Activated CD4-positive, alpha-beta T cell treated with anti-CD3 and anti-CD28 coated beads for 36 hours (primary cell): ENCODE measurements at regions of chr5 and their contacts with region 1.

Region 1: GRCh38 chr5:62284946-62285891 is 20.8 kb upstream of the KIF2A start:
- DNase-seq: peak; percentile 84
- ATAC-seq: peak; percentile 84
- H3K4me3 Mint-ChIP-seq: peak overlapping the region; percentile 35
- H3K27ac Mint-ChIP-seq: peak overlapping the region; percentile 96
- H3K4me1 Mint-ChIP-seq: peaks cover 79% of the 10 kb centered on the region
- H3K27me3 Mint-ChIP-seq: no peaks in the 10 kb centered on the region

Region 2: DNA sequence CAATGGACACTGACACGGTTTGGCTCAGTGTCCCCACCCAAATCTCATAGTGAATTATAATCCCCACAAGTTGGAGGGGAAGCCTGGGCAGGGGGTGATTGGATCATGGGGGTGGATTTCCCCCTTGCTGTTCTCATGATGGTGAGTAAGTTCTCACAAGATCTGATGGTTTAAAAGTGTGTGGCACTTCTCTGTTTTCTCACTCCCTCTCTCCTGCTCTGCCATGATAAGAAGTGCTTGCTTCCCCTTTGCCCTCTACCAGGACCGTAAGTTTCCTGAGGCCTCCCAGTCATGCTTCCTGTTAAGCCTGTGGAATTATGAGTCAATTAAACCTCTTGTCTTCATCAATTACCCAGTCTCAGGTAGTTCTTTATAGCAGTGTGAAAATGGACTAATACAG is 95.0 kb before region 1 on chr5:
- CTCF ChIA-PET with region 1: no interaction called
- POLR2A ChIA-PET with region 1: no interaction called
- intact Hi-C with region 1: no loop called
- DNase-seq: no peak
- ATAC-seq: no peak
- H3K4me3 Mint-ChIP-seq: no peak overlapping the region
- H3K27ac Mint-ChIP-seq: no peak overlapping the region
- H3K4me1 Mint-ChIP-seq: no peaks in the 10 kb centered on the region
- H3K27me3 Mint-ChIP-seq: peaks cover 9% of the 10 kb centered on the region

Region 3: DNA sequence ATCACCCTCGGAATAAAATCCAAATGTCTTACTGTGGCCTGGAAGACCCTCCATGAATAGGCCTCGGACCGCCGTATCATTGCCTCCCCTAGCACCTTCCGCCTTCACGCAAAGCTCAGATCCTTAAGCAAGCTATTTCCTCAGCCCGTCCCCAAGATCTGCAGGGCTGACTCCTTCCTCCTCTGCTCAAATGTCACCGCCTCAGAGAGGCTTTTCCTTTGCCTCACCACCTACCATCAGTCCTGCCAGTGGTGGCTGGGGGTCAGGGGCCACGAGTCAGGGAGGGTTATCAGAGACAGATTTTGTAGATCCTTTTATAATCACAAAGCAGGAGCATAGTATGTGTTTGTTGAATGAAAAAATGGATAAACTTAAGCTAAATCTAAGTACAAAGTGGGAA is 53.6 kb before region 1 on chr5:
- CTCF ChIA-PET with region 1: interaction called, 3 read pairs
- POLR2A ChIA-PET with region 1: interaction called, 6 read pairs
- intact Hi-C with region 1: loop called (anchors 5 kb)
- DNase-seq: no peak
- ATAC-seq: no peak
- H3K4me3 Mint-ChIP-seq: no peak overlapping the region
- H3K27ac Mint-ChIP-seq: no peak overlapping the region
- H3K4me1 Mint-ChIP-seq: peaks cover 18% of the 10 kb centered on the region
- H3K27me3 Mint-ChIP-seq: no peaks in the 10 kb centered on the region

Region 4: GRCh38 chr5:62297026-62297425 is 11.8 kb after region 1 on chr5:
- CTCF ChIA-PET with region 1: interaction called, 17 read pairs
- POLR2A ChIA-PET with region 1: no interaction called
- intact Hi-C with region 1: no loop called
- DNase-seq: no peak
- ATAC-seq: peak; percentile 78
- H3K4me3 Mint-ChIP-seq: peak overlapping the region; percentile 38
- H3K27ac Mint-ChIP-seq: peak overlapping the region; percentile 73
- H3K4me1 Mint-ChIP-seq: peaks cover 62% of the 10 kb centered on the region
- H3K27me3 Mint-ChIP-seq: no peaks in the 10 kb centered on the region

Region 5: GRCh38 chr5:62403434-62404250 is 118.4 kb after region 1 on chr5 and contains the start of gene DIMT1:
- CTCF ChIA-PET with region 1: no interaction called
- POLR2A ChIA-PET with region 1: interaction called, 6 read pairs
- intact Hi-C with region 1: loop called in 1 of 2 experiments (anchors 5 kb)
- DNase-seq: peak; percentile 97
- ATAC-seq: peak; percentile 99
- H3K4me3 Mint-ChIP-seq: peak within 1 kb of the TSS; percentile 95
- H3K27ac Mint-ChIP-seq: peak within 1 kb of the TSS; percentile 97
- H3K4me1 Mint-ChIP-seq: peaks cover 29% of the 10 kb centered on the region
- H3K27me3 Mint-ChIP-seq: no peaks in the 10 kb centered on the region
- total RNA-seq, gene DIMT1: 38.9 to 52.2 TPM

Region 6: GRCh38 chr5:62538017-62538942 is 253.1 kb after region 1 on chr5:
- CTCF ChIA-PET with region 1: no interaction called
- POLR2A ChIA-PET with region 1: no interaction called
- intact Hi-C with region 1: loop called in 1 of 2 experiments (anchors 1 kb)
- DNase-seq: peak; percentile 28
- ATAC-seq: peak; percentile 94
- H3K4me3 Mint-ChIP-seq: no peak overlapping the region
- H3K27ac Mint-ChIP-seq: peak overlapping the region; percentile 86
- H3K4me1 Mint-ChIP-seq: peaks cover 15% of the 10 kb centered on the region
- H3K27me3 Mint-ChIP-seq: no peaks in the 10 kb centered on the region